ENCODE measurements at regions of chr18 and their contacts with region 1.

Region 1: DNA sequence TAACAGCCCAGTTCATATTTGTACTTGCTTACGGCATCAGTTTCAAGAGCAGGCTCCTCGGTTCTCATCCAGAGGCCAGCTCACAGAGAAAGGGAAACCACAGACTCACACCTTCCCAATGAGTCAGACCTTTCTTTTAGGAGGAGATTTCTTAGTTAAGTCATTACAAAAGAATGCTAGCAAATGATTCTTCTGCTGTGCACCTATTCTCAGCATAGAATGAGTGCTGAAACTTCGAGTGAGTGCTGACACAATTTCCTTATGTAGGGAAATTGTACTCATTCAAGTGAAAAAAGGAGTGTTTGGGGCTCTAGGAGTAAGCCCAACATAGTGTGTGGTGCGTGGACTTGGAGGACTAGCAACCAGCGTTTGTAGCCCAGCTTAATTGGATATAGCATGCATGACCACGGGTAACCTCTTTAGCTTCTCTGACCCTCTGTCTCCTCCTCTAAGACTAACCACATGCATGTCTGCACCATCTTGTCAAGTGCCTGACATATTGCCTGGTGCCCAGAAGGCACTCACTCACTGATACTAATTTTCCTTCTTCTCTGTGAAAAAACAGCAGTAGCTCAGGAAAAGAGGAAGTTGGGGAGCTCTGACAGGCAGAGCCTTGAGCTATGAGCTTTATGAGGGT is 87.0 kb downstream of the ALPK2 start:
- DNase-seq: peak; percentile 95
- H3K4me3 Mint-ChIP-seq: no peak overlapping the region
- H3K27ac Mint-ChIP-seq: peak overlapping the region; percentile 85
- H3K4me1 Mint-ChIP-seq: peaks cover 33% of the 10 kb centered on the region
- H3K27me3 Mint-ChIP-seq: no peaks in the 10 kb centered on the region
- CTCF ChIP-seq: no peak

Region 2: DNA sequence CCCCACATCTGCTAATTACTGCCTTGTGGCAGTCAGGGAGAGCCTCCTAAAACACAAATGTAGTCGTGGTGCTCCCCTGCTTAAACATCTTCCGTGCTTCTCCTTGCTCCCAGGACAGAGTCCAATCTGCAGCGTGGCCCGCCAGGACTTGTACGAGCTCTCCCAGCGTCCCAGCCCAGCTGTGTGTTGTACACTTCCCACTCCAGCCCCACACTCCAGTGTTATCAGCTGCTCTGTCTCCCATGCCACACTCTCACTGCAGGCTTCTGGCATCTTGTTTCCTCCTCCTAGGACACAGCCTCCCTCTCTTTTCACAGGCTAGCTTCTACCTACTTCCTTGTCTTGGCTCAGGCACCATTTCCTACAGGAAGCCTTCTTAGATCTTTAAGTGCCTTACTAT is 112.5 kb before region 1 on chr18:
- CTCF ChIA-PET with region 1: no interaction called
- POLR2A ChIA-PET with region 1: no interaction called
- intact Hi-C with region 1: no loop called
- DNase-seq: no peak
- H3K4me3 Mint-ChIP-seq: no peak overlapping the region
- H3K27ac Mint-ChIP-seq: no peak overlapping the region
- H3K4me1 Mint-ChIP-seq: no peaks in the 10 kb centered on the region
- H3K27me3 Mint-ChIP-seq: no peaks in the 10 kb centered on the region
- CTCF ChIP-seq: no peak

Region 3: GRCh38 chr18:58552057-58552461 is 10.2 kb after region 1 on chr18:
- CTCF ChIA-PET with region 1: interaction called, 3 read pairs
- POLR2A ChIA-PET with region 1: interaction called, 10 read pairs
- intact Hi-C with region 1: no loop called
- DNase-seq: peak; percentile 53
- H3K4me3 Mint-ChIP-seq: no peak overlapping the region
- H3K27ac Mint-ChIP-seq: peak overlapping the region; percentile 76
- H3K4me1 Mint-ChIP-seq: peaks cover 24% of the 10 kb centered on the region
- H3K27me3 Mint-ChIP-seq: no peaks in the 10 kb centered on the region
- CTCF ChIP-seq: no peak

Region 4: DNA sequence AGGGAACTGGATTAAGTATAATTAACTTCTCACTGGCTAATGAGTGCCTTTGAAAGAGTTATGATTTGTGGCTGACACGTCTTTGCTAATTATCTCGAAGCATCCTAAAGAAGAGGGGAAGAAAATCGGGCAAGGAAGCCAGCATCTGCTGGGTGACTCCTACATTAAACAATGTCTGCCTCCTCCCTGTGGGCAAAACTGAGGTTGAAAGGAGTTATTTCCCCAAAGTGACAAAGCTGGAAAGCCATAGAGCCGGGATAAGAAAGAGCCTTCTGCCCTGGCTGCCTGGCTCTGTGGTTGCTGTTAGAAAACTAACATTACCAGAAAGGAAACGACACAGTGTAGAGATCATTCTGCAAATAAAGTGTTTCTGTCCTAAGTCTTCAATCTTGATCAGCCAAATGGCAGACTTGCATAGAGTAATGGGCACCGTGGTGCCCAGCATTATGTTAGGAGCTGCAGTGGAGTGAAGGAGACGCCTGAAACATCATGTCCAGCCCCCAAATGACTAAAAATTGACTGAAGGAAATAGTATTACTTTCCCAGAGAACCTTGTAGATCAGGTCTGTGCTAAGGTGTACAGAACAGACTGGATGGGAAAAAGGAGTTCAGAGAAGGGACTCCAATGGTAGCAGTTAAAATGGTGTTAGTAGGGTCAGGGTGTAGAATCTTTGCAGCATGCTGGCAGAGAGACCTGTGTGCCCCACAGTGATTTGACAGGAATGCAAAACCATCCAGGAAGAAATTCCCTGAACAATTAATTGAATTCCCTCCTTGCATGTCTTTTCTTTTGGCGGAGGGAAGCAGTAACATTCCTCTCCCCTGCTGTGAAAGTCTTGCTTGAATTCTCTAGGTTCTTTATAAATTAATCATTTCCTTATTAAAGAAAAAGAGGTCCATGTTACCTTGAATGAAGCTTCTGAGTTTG is 42.6 kb after region 1 on chr18:
- CTCF ChIA-PET with region 1: no interaction called
- POLR2A ChIA-PET with region 1: no interaction called
- intact Hi-C with region 1: loop called (anchors 5 kb)
- DNase-seq: peak; percentile 42
- H3K4me3 Mint-ChIP-seq: no peak overlapping the region
- H3K27ac Mint-ChIP-seq: no peak overlapping the region
- H3K4me1 Mint-ChIP-seq: peaks cover 14% of the 10 kb centered on the region
- H3K27me3 Mint-ChIP-seq: no peaks in the 10 kb centered on the region
- CTCF ChIP-seq: no peak

Region 5: GRCh38 chr18:58682429-58683069 is 140.6 kb after region 1 on chr18:
- CTCF ChIA-PET with region 1: interaction called, 3 read pairs
- POLR2A ChIA-PET with region 1: interaction called, 13 read pairs
- intact Hi-C with region 1: no loop called
- DNase-seq: peak; percentile 94
- H3K4me3 Mint-ChIP-seq: peak overlapping the region; percentile 1
- H3K27ac Mint-ChIP-seq: peak overlapping the region; percentile 60
- H3K4me1 Mint-ChIP-seq: peaks cover 28% of the 10 kb centered on the region
- H3K27me3 Mint-ChIP-seq: no peaks in the 10 kb centered on the region
- CTCF ChIP-seq: no peak